ENCODE measurements at regions of chr6 and their contacts with region 1.

Region 1: DNA sequence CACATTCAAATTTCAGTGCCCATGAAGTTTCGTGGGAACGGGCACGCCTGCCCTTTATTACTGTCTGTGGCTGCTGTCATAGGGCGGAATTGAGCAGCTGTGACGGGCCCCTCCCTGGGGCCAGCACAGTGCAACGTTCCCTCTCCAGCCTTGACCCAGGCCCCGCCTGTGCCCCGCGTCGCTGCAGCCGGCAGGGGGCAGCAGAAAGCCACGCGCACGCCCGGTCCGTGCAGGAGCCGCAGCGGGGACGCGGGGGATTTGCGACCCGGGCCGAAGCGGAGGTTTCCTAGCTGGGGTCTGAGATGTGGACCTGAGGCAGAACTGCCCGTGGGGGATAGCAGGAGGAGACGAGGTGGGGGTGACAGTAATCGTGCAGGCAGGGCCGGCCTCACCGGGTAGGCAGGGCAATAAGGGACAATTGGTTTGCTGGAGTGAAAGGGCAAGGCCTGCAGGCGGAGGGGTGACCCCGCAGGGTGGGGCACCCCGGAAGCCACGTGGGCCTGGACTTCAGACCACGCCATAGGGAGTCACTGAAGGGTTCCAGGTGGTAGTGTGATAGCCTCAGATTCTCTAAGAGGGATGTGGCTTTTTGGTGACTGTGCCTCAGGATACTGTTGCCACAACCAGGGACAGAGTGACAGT is 54.4 kb downstream of the SYTL3 start:
- DNase-seq: peak; percentile 90
- ATAC-seq: peak; percentile 98
- H3K4me3 ChIP-seq: peak overlapping the region in 4 of 5 experiments; percentile 33 to 59 (median 52)
- H3K4me3 Mint-ChIP-seq: peak overlapping the region; percentile 92
- H3K27ac ChIP-seq: peak overlapping the region in 1 of 2 donors; percentile 36
- H3K27ac Mint-ChIP-seq: peak overlapping the region; percentile 89
- H3K4me1 ChIP-seq: peaks cover 19 to 30% of the 10 kb centered on the region in 2 donors
- H3K4me1 Mint-ChIP-seq: peaks cover 27% of the 10 kb centered on the region
- H3K27me3 ChIP-seq: no peaks in the 10 kb centered on the region
- H3K27me3 Mint-ChIP-seq: no peaks in the 10 kb centered on the region
- CTCF ChIP-seq: peak; percentile 99

Region 2: GRCh38 chr6:157613011-157613522 is 1091.2 kb before region 1 on chr6:
- CTCF ChIA-PET with region 1: no interaction called
- POLR2A ChIA-PET with region 1: no interaction called
- intact Hi-C with region 1: no loop called
- DNase-seq: no peak
- ATAC-seq: no peak
- H3K4me3 ChIP-seq: no peak overlapping the region
- H3K4me3 Mint-ChIP-seq: no peak overlapping the region
- H3K27ac ChIP-seq: no peak overlapping the region
- H3K27ac Mint-ChIP-seq: peak overlapping the region; percentile 15
- H3K4me1 ChIP-seq: peaks cover 46 to 77% of the 10 kb centered on the region in 2 donors
- H3K4me1 Mint-ChIP-seq: peaks cover 70% of the 10 kb centered on the region
- H3K27me3 ChIP-seq: no peaks in the 10 kb centered on the region
- H3K27me3 Mint-ChIP-seq: no peaks in the 10 kb centered on the region
- CTCF ChIP-seq: no peak

Region 3: GRCh38 chr6:158644231-158645063 is 59.9 kb before region 1 on chr6 and contains the start of gene DYNLT1:
- CTCF ChIA-PET with region 1: no interaction called
- POLR2A ChIA-PET with region 1: no interaction called
- intact Hi-C with region 1: no loop called
- DNase-seq: peak; percentile 91
- ATAC-seq: peak; percentile 85
- H3K4me3 ChIP-seq: peak within 1 kb of the TSS; percentile 86 to 99 (median 97)
- H3K4me3 Mint-ChIP-seq: peak within 1 kb of the TSS; percentile 98
- H3K27ac ChIP-seq: peak within 1 kb of the TSS; percentile 90 to 91
- H3K27ac Mint-ChIP-seq: peak within 1 kb of the TSS; percentile 97
- H3K4me1 ChIP-seq: peaks cover 14 to 31% of the 10 kb centered on the region in 2 donors
- H3K4me1 Mint-ChIP-seq: peaks cover 51% of the 10 kb centered on the region
- H3K27me3 ChIP-seq: no peaks in the 10 kb centered on the region
- H3K27me3 Mint-ChIP-seq: no peaks in the 10 kb centered on the region
- CTCF ChIP-seq: no peak
- total RNA-seq, gene DYNLT1: 34.8 and 38.5 TPM in 2 replicates

Region 4: DNA sequence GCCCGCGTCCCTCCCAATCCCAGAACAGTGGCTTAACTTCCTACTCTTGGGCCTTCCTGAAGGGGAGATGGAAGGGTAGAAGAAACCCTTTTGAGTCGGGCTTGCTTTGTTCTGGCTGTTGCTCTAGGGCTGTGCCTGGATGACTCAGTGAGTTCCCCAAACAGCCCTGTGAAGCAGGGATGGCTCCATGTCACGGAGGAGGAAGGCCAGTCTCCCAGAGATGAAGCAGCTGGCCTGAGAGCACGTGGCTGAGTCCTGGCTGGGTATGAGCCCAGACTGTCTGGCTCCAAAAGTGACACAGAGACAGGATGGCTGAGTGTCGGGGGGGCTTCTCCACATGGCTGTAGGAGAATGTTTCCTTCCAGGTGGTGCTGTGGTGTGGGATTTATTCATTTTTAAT is 49.8 kb before region 1 on chr6:
- CTCF ChIA-PET with region 1: no interaction called
- POLR2A ChIA-PET with region 1: no interaction called
- intact Hi-C with region 1: no loop called
- DNase-seq: no peak
- ATAC-seq: no peak
- H3K4me3 ChIP-seq: no peak overlapping the region
- H3K4me3 Mint-ChIP-seq: no peak overlapping the region
- H3K27ac ChIP-seq: no peak overlapping the region
- H3K27ac Mint-ChIP-seq: peak overlapping the region; percentile 71
- H3K4me1 ChIP-seq: peaks cover 10 to 13% of the 10 kb centered on the region in 2 donors
- H3K4me1 Mint-ChIP-seq: peaks cover 18% of the 10 kb centered on the region
- H3K27me3 ChIP-seq: peaks cover 0 to 7% (median 0%) of the 10 kb centered on the region in 4 experiments
- H3K27me3 Mint-ChIP-seq: peaks cover 15% of the 10 kb centered on the region
- CTCF ChIP-seq: no peak

Region 5: DNA sequence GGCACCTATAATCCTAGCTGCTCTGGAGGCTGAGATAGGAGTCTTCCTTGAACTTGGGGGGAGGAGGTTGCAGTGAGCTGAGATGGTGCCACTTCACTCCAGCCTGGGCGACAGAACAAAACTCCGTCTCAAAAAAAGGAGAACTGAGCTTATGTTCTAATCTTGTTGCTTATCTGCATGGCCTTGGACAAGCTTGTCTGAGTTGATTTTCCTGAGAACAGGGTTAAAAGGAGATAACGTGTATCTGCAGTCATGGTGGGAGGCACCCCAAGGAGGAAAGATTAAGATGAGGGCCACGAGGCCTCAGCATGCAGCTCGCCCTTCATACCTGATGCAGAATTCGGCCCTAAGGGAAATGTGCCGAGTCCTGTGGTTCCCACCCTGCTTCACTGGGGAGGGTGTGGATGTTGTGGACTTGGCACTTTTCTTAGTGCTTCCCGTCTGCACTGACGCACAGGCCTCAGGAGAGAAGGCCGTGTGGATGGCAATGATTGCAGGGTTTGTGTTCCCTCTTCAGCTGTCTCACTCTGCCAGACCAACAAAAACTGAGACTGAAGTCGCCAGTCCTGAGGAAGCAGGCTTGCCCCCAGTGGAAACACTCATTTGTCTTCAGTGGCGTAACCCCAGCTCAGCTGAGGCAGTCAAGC is 58.6 kb after region 1 on chr6:
- CTCF ChIA-PET with region 1: interaction called, 8 read pairs
- POLR2A ChIA-PET with region 1: interaction called, 4 read pairs
- intact Hi-C with region 1: loop called (anchors 1 kb)
- DNase-seq: peak; percentile 63
- ATAC-seq: no peak
- H3K4me3 ChIP-seq: no peak overlapping the region
- H3K4me3 Mint-ChIP-seq: no peak overlapping the region
- H3K27ac ChIP-seq: no peak overlapping the region
- H3K27ac Mint-ChIP-seq: peak overlapping the region; percentile 71
- H3K4me1 ChIP-seq: no peaks in the 10 kb centered on the region
- H3K4me1 Mint-ChIP-seq: peaks cover 2% of the 10 kb centered on the region
- H3K27me3 ChIP-seq: no peaks in the 10 kb centered on the region
- H3K27me3 Mint-ChIP-seq: no peaks in the 10 kb centered on the region
- CTCF ChIP-seq: no peak

Region 6: GRCh38 chr6:158958504-158959386 is 254.4 kb after region 1 on chr6:
- CTCF ChIA-PET with region 1: interaction called, 32 read pairs
- POLR2A ChIA-PET with region 1: interaction called, 4 read pairs
- intact Hi-C with region 1: no loop called
- DNase-seq: peak; percentile 71
- ATAC-seq: peak; percentile 82
- H3K4me3 ChIP-seq: no peak overlapping the region
- H3K4me3 Mint-ChIP-seq: no peak overlapping the region
- H3K27ac ChIP-seq: no peak overlapping the region
- H3K27ac Mint-ChIP-seq: peak overlapping the region; percentile 69
- H3K4me1 ChIP-seq: peaks cover 5 to 10% of the 10 kb centered on the region in 2 donors
- H3K4me1 Mint-ChIP-seq: peaks cover 23% of the 10 kb centered on the region
- H3K27me3 ChIP-seq: no peaks in the 10 kb centered on the region
- H3K27me3 Mint-ChIP-seq: no peaks in the 10 kb centered on the region
- CTCF ChIP-seq: peak; percentile 42

Measured in B cell (primary cell).